ENCODE measurements at regions of chr5 and their contacts with region 1.

Region 1: GRCh38 chr5:5421961-5422818 is at the start of gene ICE1:
- DNase-seq: peak; percentile 93 to 98 (median 98)
- H3K4me3 ChIP-seq: peak within 1 kb of the TSS; percentile 47 to 100 (median 95)
- H3K27ac ChIP-seq: peak within 1 kb of the TSS; percentile 94 to 100 (median 100)
- H3K27me3 ChIP-seq: no peaks in the 10 kb centered on the region
- CTCF ChIP-seq: peak in 34 of 56 donors; percentile 8 to 54 (median 29)
- total RNA-seq, gene ICE1: 31.0 to 47.1 (median 37.4) TPM

Region 2: GRCh38 chr5:4879693-4880303 is 542.4 kb before region 1 on chr5:
- intact Hi-C with region 1: loop called (anchors 2 to 10 kb)
- DNase-seq: peak; percentile 65 to 90 (median 86)
- H3K4me3 ChIP-seq: no peak overlapping the region
- H3K27ac ChIP-seq: no peak overlapping the region
- H3K27me3 ChIP-seq: no peaks in the 10 kb centered on the region
- CTCF ChIP-seq: peak; percentile 70 to 98 (median 92)

Region 3: DNA sequence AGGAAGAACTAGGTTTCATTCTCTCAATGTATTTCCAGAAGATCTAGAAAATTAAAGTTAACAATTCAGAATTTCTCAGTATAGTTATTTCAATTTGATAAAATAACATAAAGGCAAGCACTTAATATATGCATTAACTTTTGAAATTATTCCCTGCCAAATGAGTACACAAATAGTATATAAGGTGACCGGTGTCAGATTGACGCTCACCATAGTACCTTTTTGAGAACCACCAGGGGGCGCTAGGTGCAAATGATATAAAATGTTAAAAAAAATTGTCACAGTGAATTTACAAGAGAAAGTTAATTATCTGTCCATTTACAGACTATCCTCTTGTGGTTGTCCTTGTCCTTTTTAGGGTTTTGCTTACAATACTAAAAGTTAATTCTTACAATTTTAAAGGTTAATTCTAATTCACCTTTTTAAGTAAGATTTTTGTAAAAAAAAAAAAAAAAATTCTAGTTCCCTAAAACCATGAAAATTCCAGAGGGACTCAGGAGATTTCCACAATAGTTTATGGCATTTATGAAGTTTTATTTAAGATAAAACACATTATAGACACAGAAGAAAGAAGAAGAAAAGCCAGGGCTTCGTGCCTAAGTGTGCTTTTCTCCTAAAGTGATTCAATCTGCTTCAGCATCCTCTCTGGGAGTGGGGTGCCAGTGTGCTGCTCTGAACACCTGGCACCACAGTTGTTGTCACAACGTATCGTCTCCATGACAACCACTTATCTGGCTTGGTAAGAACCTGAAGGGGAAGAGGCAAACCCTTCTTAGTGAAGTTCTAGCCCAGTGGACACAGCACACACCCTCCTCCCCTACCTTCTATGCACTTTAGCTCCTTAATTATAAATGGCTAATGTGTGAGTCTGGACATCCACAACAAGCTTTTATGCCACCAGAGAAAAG is 280.3 kb before region 1 on chr5:
- intact Hi-C with region 1: loop called (anchors 2 kb)
- DNase-seq: peak in 4 of 10 donors; percentile 48 to 73 (median 59)
- H3K4me3 ChIP-seq: peak overlapping the region in 53 of 59 donors; percentile 39 to 75 (median 60)
- H3K27ac ChIP-seq: peak overlapping the region in 1 of 59 donors; percentile 76
- H3K27me3 ChIP-seq: peaks cover 0 to 28% (median 12%) of the 10 kb centered on the region in 45 donors
- CTCF ChIP-seq: peak; percentile 79 to 98 (median 92)

Region 4: GRCh38 chr5:6632917-6633468 is 1210.8 kb after region 1 on chr5 and contains the starts of genes NSUN2 and SRD5A1:
- intact Hi-C with region 1: loop called (anchors 2 kb)
- DNase-seq: peak; percentile 83 to 93 (median 90)
- H3K4me3 ChIP-seq: peak within 1 kb of the TSS; percentile 68 to 100 (median 96)
- H3K27ac ChIP-seq: peak within 1 kb of the TSS; percentile 45 to 100 (median 97)
- H3K27me3 ChIP-seq: no peaks in the 10 kb centered on the region
- CTCF ChIP-seq: peak in 16 of 56 donors; percentile 4 to 48 (median 18)
- total RNA-seq, gene NSUN2: 23.9 to 79.2 (median 38.6) TPM
- total RNA-seq, gene SRD5A1: 15.2 to 41.5 (median 25.7) TPM

Region 5: GRCh38 chr5:6712577-6713275 is 1290.5 kb after region 1 on chr5:
- intact Hi-C with region 1: loop called in 1 of 2 experiments (anchors 5 kb)
- DNase-seq: peak; percentile 89 to 97 (median 94)
- H3K4me3 ChIP-seq: peak overlapping the region; percentile 55 to 98 (median 88)
- H3K27ac ChIP-seq: peak overlapping the region; percentile 57 to 99 (median 97)
- H3K27me3 ChIP-seq: no peaks in the 10 kb centered on the region
- CTCF ChIP-seq: peak in 20 of 56 donors; percentile 0 to 60 (median 22)

Measured in dorsolateral prefrontal cortex (tissue), 120 donors.